GM13976 (cell line): ENCODE measurements at regions of chr12 and their contacts with region 1.

Region 1: GRCh38 chr12:56987551-56988053 is 18.7 kb downstream of the ZBTB39 start:
- DNase-seq: peak; percentile 79
- CTCF ChIP-seq: peak; percentile 80

Region 2: GRCh38 chr12:56165369-56165768 is 822.2 kb before region 1 on chr12:
- in situ Hi-C with region 1: no loop called
- DNase-seq: no peak
- CTCF ChIP-seq: no peak

Region 3: DNA sequence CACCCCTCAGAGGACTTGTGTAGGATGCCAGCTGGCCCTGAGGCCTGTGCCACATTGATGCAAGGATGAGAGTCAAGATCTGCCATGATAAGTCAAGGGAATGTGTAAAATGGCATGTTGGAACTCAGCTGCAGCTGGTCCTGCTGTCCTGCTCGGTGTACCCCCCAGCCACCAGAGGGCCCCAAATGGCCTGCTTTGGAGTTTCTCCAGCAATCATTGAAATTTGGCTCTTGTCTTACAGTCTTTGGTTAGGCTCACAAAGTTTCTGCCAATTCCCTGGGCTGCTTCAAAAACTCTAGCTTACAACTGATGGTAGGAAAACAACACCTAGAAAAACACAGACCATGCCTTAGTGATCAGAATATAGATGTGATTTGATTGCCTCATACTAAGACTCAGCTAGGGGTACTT is 147.7 kb before region 1 on chr12:
- in situ Hi-C with region 1: loop called (anchors 25 kb)
- DNase-seq: peak; percentile 38
- CTCF ChIP-seq: peak; percentile 43